CD4-positive, alpha-beta T cell (primary cell): ENCODE measurements at regions of chr19 and their contacts with region 1.

Region 1: DNA sequence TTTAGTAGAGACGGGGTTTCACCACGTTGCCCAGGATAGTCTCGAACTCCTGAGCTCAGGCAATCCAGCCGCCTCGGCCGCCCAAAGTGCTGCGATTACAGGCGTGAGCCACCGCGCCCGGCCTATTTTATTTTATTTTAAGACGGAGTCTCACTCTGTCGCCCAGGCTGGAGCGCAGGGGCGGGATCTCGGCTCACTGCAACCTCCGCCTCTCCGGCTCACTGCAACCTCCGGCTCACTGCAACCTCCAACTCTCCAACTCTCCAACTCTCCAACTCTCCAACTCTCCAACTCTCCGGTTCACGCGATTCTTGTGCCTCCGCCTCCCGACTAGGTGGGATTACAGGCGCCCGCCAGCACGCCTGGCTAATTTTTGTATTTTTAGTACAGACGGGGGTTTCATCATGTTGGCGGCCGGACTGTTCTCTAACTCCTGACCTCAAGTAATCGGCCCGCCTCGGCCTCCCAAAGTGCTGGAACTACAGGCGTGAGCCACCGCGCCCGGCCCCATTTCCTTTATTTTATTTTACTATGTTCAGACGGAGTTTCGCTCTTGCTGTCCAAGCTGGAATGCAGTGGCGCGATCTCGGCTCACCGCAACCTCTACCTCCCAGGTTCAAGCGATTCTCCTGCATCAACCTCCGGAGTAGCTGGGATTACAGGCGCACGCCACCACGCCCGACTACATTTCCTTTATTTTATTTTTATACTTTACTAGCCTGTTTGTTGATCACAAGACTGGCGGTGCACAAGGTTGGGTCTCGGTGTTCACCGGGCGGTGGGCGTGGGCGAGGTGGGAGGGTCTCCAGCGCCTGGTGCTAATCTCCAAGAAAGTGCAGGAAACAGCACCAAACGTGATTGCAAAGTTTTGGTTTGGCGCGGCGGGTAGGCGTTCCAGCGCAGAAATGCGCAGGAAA is 23.7 kb upstream of the ZNF850 start:
- DNase-seq: peak in 1 of 14 experiments; percentile 7
- ATAC-seq: no peak
- H3K4me3 ChIP-seq: peak overlapping the region; percentile 76
- H3K4me3 Mint-ChIP-seq: peak overlapping the region; percentile 100
- H3K27ac ChIP-seq: peak overlapping the region; percentile 63 to 67
- H3K27ac Mint-ChIP-seq: peak overlapping the region; percentile 99
- H3K4me1 ChIP-seq: peaks cover 14% of the 10 kb centered on the region
- H3K4me1 Mint-ChIP-seq: peaks cover 26% of the 10 kb centered on the region
- H3K27me3 ChIP-seq: no peaks in the 10 kb centered on the region
- H3K27me3 Mint-ChIP-seq: peaks cover 9% of the 10 kb centered on the region
- CTCF ChIP-seq: no peak

Region 2: GRCh38 chr19:36707134-36707533 is 89.2 kb before region 1 on chr19:
- CTCF ChIA-PET with region 1: no interaction called
- POLR2A ChIA-PET with region 1: no interaction called
- intact Hi-C with region 1: no loop called
- DNase-seq: no peak
- ATAC-seq: no peak
- H3K4me3 ChIP-seq: no peak overlapping the region
- H3K4me3 Mint-ChIP-seq: no peak overlapping the region
- H3K27ac ChIP-seq: no peak overlapping the region
- H3K27ac Mint-ChIP-seq: no peak overlapping the region
- H3K4me1 ChIP-seq: no peaks in the 10 kb centered on the region
- H3K4me1 Mint-ChIP-seq: no peaks in the 10 kb centered on the region
- H3K27me3 ChIP-seq: no peaks in the 10 kb centered on the region
- H3K27me3 Mint-ChIP-seq: no peaks in the 10 kb centered on the region
- CTCF ChIP-seq: no peak

Region 3: GRCh38 chr19:36772311-36773222 is 23.8 kb before region 1 on chr19 and contains the start of gene ZNF850:
- CTCF ChIA-PET with region 1: no interaction called
- POLR2A ChIA-PET with region 1: interaction called, 6 read pairs
- intact Hi-C with region 1: loop called (anchors 1 kb)
- DNase-seq: peak; percentile 87 to 96 (median 93)
- ATAC-seq: peak; percentile 94
- H3K4me3 ChIP-seq: peak within 1 kb of the TSS; percentile 91
- H3K4me3 Mint-ChIP-seq: peak within 1 kb of the TSS; percentile 95
- H3K27ac ChIP-seq: peak within 1 kb of the TSS; percentile 78 to 94
- H3K27ac Mint-ChIP-seq: peak within 1 kb of the TSS; percentile 84
- H3K4me1 ChIP-seq: peaks cover 20% of the 10 kb centered on the region
- H3K4me1 Mint-ChIP-seq: peaks cover 20% of the 10 kb centered on the region
- H3K27me3 ChIP-seq: no peaks in the 10 kb centered on the region
- H3K27me3 Mint-ChIP-seq: no peaks in the 10 kb centered on the region
- CTCF ChIP-seq: no peak
- total RNA-seq, gene ZNF850: 0.77 to 2.1 TPM